Activated B cell treated with CpG ODN at 0.5 μM for 24 hours (primary cell): ENCODE measurements at regions of chr16 and their contacts with region 1.

Region 1: DNA sequence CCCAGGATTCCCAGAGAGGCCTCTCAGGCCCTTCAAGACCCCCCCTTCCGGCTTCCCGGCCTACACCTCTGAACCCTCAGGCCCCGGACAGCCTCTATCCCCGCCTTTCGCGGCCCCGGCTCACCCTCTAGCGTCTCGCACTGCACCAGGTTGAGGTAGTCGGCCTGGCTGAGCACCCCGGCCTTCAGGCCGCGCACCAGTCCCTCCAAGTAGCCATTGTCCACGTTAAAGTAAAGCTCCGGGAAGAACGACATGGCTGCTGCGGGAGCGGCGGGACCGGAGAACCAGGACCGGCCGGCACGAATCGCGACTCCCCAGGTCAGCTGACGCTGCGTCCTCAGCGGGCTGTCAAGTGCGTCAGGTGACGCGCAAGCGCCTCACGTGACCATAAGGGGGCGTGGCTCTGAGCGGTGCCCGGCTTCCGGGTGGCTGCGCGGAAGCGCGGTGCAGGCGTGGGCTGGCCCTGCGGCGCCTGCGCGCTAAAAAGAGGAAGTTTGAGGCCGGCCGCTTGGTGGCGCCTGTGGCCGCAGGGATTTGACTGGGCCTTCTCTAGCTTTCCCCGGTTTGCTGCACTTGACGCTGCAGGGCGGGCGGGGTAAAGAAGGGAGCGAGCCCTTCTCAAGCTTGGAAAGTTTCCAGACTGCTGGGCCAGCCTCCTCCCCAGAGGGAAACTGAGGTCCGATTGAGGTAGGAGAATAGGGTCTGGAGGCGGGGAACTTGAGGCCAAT is at the start of gene ATP6V0D1:
- DNase-seq: peak; percentile 99
- ATAC-seq: peak; percentile 82
- H3K4me3 Mint-ChIP-seq: peak within 1 kb of the TSS; percentile 99
- H3K27ac Mint-ChIP-seq: peak within 1 kb of the TSS; percentile 99
- H3K4me1 Mint-ChIP-seq: peaks cover 69% of the 10 kb centered on the region
- H3K27me3 Mint-ChIP-seq: no peaks in the 10 kb centered on the region
- CTCF ChIP-seq: no peak
- total RNA-seq, gene ATP6V0D1: 70.2 and 74.5 TPM in 2 replicates

Region 2: GRCh38 chr16:67413978-67414911 is 66.8 kb before region 1 on chr16:
- CTCF ChIA-PET with region 1: no interaction called
- POLR2A ChIA-PET with region 1: no interaction called
- intact Hi-C with region 1: no loop called
- DNase-seq: no peak
- ATAC-seq: no peak
- H3K4me3 Mint-ChIP-seq: no peak overlapping the region
- H3K27ac Mint-ChIP-seq: no peak overlapping the region
- H3K4me1 Mint-ChIP-seq: peaks cover 8% of the 10 kb centered on the region
- H3K27me3 Mint-ChIP-seq: peaks cover 6% of the 10 kb centered on the region
- CTCF ChIP-seq: no peak

Region 3: GRCh38 chr16:67499106-67499505 is 18.1 kb after region 1 on chr16:
- CTCF ChIA-PET with region 1: interaction called, 65 read pairs
- POLR2A ChIA-PET with region 1: interaction called, 11 read pairs
- intact Hi-C with region 1: loop called (anchors 1 kb)
- DNase-seq: no peak
- ATAC-seq: no peak
- H3K4me3 Mint-ChIP-seq: no peak overlapping the region
- H3K27ac Mint-ChIP-seq: no peak overlapping the region
- H3K4me1 Mint-ChIP-seq: peaks cover 28% of the 10 kb centered on the region
- H3K27me3 Mint-ChIP-seq: no peaks in the 10 kb centered on the region
- CTCF ChIP-seq: no peak

Region 4: GRCh38 chr16:67530013-67530939 is 49.3 kb after region 1 on chr16:
- CTCF ChIA-PET with region 1: interaction called, 6 read pairs
- POLR2A ChIA-PET with region 1: interaction called, 11 read pairs
- intact Hi-C with region 1: no loop called
- DNase-seq: peak; percentile 81
- ATAC-seq: peak; percentile 65
- H3K4me3 Mint-ChIP-seq: peak overlapping the region; percentile 90
- H3K27ac Mint-ChIP-seq: peak overlapping the region; percentile 95
- H3K4me1 Mint-ChIP-seq: peaks cover 61% of the 10 kb centered on the region
- H3K27me3 Mint-ChIP-seq: no peaks in the 10 kb centered on the region
- CTCF ChIP-seq: no peak

Region 5: GRCh38 chr16:67546761-67547422 is 65.9 kb after region 1 on chr16:
- CTCF ChIA-PET with region 1: interaction called, 20 read pairs
- POLR2A ChIA-PET with region 1: interaction called, 7 read pairs
- intact Hi-C with region 1: no loop called
- DNase-seq: peak; percentile 73
- ATAC-seq: no peak
- H3K4me3 Mint-ChIP-seq: peak overlapping the region; percentile 58
- H3K27ac Mint-ChIP-seq: peak overlapping the region; percentile 95
- H3K4me1 Mint-ChIP-seq: peaks cover 87% of the 10 kb centered on the region
- H3K27me3 Mint-ChIP-seq: no peaks in the 10 kb centered on the region
- CTCF ChIP-seq: peak; percentile 95

Region 6: DNA sequence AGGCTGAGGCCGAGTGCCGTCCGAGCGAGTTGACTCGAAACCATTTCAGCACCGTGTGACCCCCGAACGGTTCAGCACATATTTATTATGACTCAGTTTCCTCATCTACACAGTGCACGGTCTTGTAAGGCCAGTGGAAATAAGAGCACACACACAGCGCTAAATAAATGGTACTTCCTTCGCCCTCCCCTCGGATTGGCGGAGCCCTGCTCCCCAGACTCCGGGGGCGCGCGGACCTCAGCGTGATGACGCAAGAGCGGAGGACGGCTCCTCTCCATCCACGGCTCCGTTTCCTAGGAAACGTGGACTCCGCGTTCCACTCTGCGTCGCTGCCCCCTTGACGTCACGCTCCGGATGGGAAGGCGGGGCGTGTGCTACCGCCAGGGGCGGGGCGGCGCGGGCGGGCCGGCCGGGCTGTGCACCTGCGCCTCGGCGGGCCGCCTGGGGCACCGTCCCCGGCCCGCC is 179.6 kb after region 1 on chr16 and contains the start of gene PARD6A:
- CTCF ChIA-PET with region 1: interaction called, 4 read pairs
- POLR2A ChIA-PET with region 1: interaction called, 5 read pairs
- intact Hi-C with region 1: loop called (anchors 1 kb)
- DNase-seq: peak; percentile 87
- ATAC-seq: peak; percentile 80
- H3K4me3 Mint-ChIP-seq: peak within 1 kb of the TSS; percentile 94
- H3K27ac Mint-ChIP-seq: peak within 1 kb of the TSS; percentile 94
- H3K4me1 Mint-ChIP-seq: peaks cover 28% of the 10 kb centered on the region
- H3K27me3 Mint-ChIP-seq: no peaks in the 10 kb centered on the region
- CTCF ChIP-seq: no peak
- total RNA-seq, gene PARD6A: 5.9 and 6.0 TPM in 2 replicates

Region 7: DNA sequence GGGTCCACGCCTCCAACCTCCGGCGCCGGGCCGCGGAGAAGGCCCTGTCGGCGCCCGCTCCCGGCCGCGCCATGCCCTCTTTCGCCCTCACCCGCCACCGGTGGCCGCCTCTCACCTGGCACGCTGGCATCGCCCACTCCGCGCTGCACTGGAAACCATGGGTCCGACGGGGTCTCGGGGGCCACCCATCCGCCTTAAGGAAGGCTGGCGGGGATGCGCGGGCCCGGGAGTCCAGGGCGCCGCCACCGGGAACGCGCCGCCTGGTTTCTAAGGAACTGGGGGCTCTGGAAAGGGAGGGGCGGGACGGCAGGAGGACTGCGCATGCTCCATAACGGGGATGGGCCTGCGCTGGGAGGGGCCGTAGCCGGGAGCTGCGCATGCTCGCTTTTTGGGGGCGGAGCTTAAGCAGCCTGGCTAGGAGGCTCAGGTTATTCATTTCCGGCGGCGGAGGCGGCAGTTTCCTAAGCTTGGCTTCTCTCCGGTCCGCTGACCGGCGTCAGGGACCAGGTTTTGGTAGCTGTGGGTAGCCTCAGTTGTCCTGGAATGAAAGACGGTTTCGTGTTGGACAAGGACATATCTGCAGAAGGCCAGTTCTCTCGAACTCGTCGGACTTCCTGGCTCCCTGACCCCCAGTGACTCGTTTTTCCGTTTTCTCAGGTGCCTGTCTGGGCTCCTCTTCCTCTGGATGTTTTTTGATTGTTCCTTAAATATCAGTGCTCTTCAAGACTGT is 238.2 kb after region 1 on chr16 and contains the start of gene GFOD2:
- CTCF ChIA-PET with region 1: no interaction called
- POLR2A ChIA-PET with region 1: interaction called, 7 read pairs
- intact Hi-C with region 1: loop called (anchors 5 kb)
- DNase-seq: peak; percentile 98
- ATAC-seq: peak; percentile 94
- H3K4me3 Mint-ChIP-seq: peak within 1 kb of the TSS; percentile 97
- H3K27ac Mint-ChIP-seq: peak within 1 kb of the TSS; percentile 98
- H3K4me1 Mint-ChIP-seq: peaks cover 37% of the 10 kb centered on the region
- H3K27me3 Mint-ChIP-seq: no peaks in the 10 kb centered on the region
- CTCF ChIP-seq: no peak
- total RNA-seq, gene GFOD2: 9.7 and 12.6 TPM in 2 replicates